A673 (cell line): ENCODE measurements at regions of chr13 and their contacts with region 1.

Region 1: DNA sequence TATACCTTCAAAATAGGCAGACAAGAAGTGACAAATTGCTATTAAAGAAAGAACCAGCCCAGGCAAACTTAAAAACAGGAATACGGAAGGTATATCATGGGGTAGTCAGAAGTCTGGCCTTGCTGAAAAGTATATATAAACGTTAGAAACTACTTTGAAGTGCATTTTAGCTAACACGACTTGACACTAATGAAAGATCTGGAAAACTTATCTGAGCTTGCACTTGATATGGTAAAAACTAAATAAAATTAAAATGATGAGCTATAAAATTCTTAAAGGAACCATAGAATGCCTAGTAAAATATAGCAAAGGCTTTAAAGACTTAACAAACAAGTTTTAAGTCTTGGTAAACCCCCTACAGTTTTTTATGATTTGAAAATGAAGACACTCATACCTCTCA is 795.3 kb upstream of the PCDH20 start:
- DNase-seq: no peak
- H3K4me3 ChIP-seq: no peak overlapping the region
- H3K27ac ChIP-seq: no peak overlapping the region
- H3K4me1 ChIP-seq: no peaks in the 10 kb centered on the region
- H3K27me3 ChIP-seq: no peaks in the 10 kb centered on the region
- CTCF ChIP-seq: no peak

Region 2: DNA sequence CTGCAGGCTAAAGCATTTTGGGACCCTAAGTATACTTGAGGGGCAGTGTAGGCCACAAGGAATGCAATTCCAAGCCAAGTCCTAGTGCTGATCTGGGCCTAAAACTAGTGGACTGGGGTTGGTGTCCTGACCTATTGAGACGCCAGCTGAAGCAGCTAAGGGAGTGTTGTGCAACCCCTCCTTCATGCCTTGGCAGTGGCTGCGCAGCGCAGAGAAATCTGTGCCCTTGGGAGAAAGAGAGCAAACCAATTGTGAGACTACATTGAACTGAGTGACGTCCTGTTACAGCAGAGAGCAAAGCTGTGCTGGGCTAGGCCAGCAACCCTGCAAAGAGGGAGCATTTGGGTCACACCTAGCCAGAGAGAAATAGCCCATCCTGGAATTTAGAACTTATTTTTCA is 1919.6 kb after region 1 on chr13:
- CTCF ChIA-PET with region 1: interaction called, 11 read pairs
- POLR2A ChIA-PET with region 1: no interaction called
- intact Hi-C with region 1: no loop called
- DNase-seq: no peak
- H3K4me3 ChIP-seq: no peak overlapping the region
- H3K27ac ChIP-seq: no peak overlapping the region
- H3K4me1 ChIP-seq: peaks cover 24% of the 10 kb centered on the region
- H3K27me3 ChIP-seq: no peaks in the 10 kb centered on the region
- CTCF ChIP-seq: no peak